B cell (primary cell): ENCODE measurements at regions of chr5 and their contacts with region 1.

Region 1: GRCh38 chr5:849651-850301 is 1.0 kb downstream of the ZDHHC11 start:
- DNase-seq: no peak
- ATAC-seq: no peak
- H3K4me3 ChIP-seq: no peak overlapping the region
- H3K4me3 Mint-ChIP-seq: no peak overlapping the region
- H3K27ac ChIP-seq: no peak overlapping the region
- H3K27ac Mint-ChIP-seq: no peak overlapping the region
- H3K4me1 ChIP-seq: no peaks in the 10 kb centered on the region
- H3K4me1 Mint-ChIP-seq: peaks cover 6% of the 10 kb centered on the region
- H3K27me3 ChIP-seq: peaks cover 0 to 3% (median 0%) of the 10 kb centered on the region in 4 experiments
- H3K27me3 Mint-ChIP-seq: peaks cover 6% of the 10 kb centered on the region
- CTCF ChIP-seq: no peak

Region 2: GRCh38 chr5:761854-762710 is 87.7 kb before region 1 on chr5:
- CTCF ChIA-PET with region 1: no interaction called
- POLR2A ChIA-PET with region 1: no interaction called
- intact Hi-C with region 1: loop called (anchors 5 kb)
- DNase-seq: no peak
- ATAC-seq: no peak
- H3K4me3 ChIP-seq: no peak overlapping the region
- H3K4me3 Mint-ChIP-seq: no peak overlapping the region
- H3K27ac ChIP-seq: no peak overlapping the region
- H3K27ac Mint-ChIP-seq: no peak overlapping the region
- H3K4me1 ChIP-seq: no peaks in the 10 kb centered on the region
- H3K4me1 Mint-ChIP-seq: no peaks in the 10 kb centered on the region
- H3K27me3 ChIP-seq: peaks cover 0 to 3% (median 0%) of the 10 kb centered on the region in 4 experiments
- H3K27me3 Mint-ChIP-seq: peaks cover 11% of the 10 kb centered on the region
- CTCF ChIP-seq: no peak